T-cell (primary cell): ENCODE measurements at regions of chr7 and their contacts with region 1.

Region 1: GRCh38 chr7:36440880-36441279 is 51.2 kb downstream of the ANLN start:
- DNase-seq: peak in 1 of 35 experiments; percentile 24
- ATAC-seq: no peak
- H3K4me3 ChIP-seq: no peak overlapping the region
- H3K4me3 Mint-ChIP-seq: no peak overlapping the region
- H3K27ac ChIP-seq: no peak overlapping the region
- H3K27ac Mint-ChIP-seq: no peak overlapping the region
- H3K4me1 ChIP-seq: no peaks in the 10 kb centered on the region
- H3K4me1 Mint-ChIP-seq: no peaks in the 10 kb centered on the region
- H3K27me3 ChIP-seq: no peaks in the 10 kb centered on the region
- H3K27me3 Mint-ChIP-seq: no peaks in the 10 kb centered on the region

Region 2: GRCh38 chr7:37201003-37201875 is 760.4 kb after region 1 on chr7:
- CTCF ChIA-PET with region 1: interaction called, 6 to 13 read pairs
- POLR2A ChIA-PET with region 1: interaction called in 1 of 2 experiments, 4 read pairs
- DNase-seq: peak in 25 of 35 experiments; percentile 4 to 65 (median 25)
- ATAC-seq: peak in 1 of 4 experiments; percentile 22
- H3K4me3 ChIP-seq: no peak overlapping the region
- H3K4me3 Mint-ChIP-seq: no peak overlapping the region
- H3K27ac ChIP-seq: no peak overlapping the region
- H3K27ac Mint-ChIP-seq: peak overlapping the region in 1 of 2 donors; percentile 71
- H3K4me1 ChIP-seq: peaks cover 0 to 2% of the 10 kb centered on the region in 2 experiments
- H3K4me1 Mint-ChIP-seq: peaks cover 4 to 11% (median 4%) of the 10 kb centered on the region in 3 donors
- H3K27me3 ChIP-seq: no peaks in the 10 kb centered on the region
- H3K27me3 Mint-ChIP-seq: no peaks in the 10 kb centered on the region